ENCODE measurements at regions of chr2 and their contacts with region 1.

Region 1: DNA sequence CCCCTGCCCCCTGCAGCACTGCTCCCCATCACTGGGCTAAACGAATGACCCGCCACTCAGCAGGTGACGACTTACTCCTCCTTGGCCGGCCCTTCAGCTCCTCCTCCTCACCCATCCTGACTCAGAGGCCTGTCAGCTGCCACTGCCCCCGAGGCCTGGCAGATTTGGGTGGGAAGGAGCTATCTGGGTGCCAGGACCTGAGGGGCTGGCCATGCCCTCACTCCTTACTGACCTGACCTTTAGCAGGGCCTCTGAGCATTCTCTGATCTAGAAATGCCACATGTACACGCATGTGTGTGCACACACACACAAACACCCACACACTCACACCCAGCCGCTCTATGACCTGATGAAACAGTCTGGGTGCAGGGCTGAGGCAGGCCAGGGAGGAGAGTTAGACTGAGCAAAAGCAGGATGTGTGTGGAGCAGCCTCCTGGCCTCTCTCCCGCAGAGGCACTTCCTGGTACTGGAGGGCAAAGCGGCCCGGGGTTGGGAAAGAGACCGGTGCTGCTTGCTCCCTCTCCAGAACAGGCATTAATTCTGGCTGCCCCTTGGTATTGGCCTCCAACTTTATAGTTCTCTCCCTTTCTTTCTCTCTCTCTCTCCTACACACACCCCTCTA is 68.0 kb downstream of the ZFP36L2 start:
- DNase-seq: peak; percentile 79
- H3K4me3 Mint-ChIP-seq: peak overlapping the region; percentile 77
- H3K27ac Mint-ChIP-seq: peak overlapping the region; percentile 99
- H3K4me1 Mint-ChIP-seq: peaks cover 72% of the 10 kb centered on the region
- H3K27me3 Mint-ChIP-seq: no peaks in the 10 kb centered on the region

Region 2: DNA sequence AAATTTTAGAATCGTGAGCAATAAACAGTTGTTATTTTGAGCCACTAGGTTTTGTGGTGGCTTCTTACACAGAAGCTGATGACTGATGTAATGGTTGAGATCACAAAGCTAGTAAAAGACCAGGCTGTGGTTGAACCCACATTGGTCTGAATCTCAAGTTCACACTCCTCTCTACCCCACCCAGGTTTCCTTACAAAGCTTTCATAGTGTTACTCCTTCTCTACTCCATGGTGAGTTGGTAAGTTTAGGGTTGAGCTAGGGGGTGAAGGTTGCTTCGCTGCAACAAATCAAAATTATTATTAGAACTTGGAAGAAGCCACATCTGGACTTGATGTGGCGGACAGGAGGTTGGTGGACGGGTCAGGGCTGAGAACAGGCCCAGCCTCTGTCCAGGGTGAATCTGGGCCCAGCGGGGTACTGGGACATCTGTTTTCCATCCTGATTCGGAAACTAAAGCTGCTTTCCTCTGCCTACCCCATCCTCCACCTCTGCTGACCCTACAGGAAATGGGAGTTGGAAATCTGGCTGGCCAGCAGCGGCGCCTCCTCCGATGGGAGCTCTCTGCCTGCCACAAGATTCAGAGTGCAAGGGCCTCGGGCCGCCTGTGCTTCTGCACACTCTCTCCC is 18.3 kb before region 1 on chr2:
- CTCF ChIA-PET with region 1: no interaction called
- intact Hi-C with region 1: loop called (anchors 2 kb)
- DNase-seq: no peak
- H3K4me3 Mint-ChIP-seq: no peak overlapping the region
- H3K27ac Mint-ChIP-seq: peak overlapping the region; percentile 14
- H3K4me1 Mint-ChIP-seq: peaks cover 78% of the 10 kb centered on the region
- H3K27me3 Mint-ChIP-seq: no peaks in the 10 kb centered on the region

Region 3: GRCh38 chr2:43184339-43184895 is 26.0 kb after region 1 on chr2:
- CTCF ChIA-PET with region 1: no interaction called
- intact Hi-C with region 1: loop called (anchors 2 kb)
- DNase-seq: peak; percentile 86
- H3K4me3 Mint-ChIP-seq: no peak overlapping the region
- H3K27ac Mint-ChIP-seq: peak overlapping the region; percentile 89
- H3K4me1 Mint-ChIP-seq: peaks cover 67% of the 10 kb centered on the region
- H3K27me3 Mint-ChIP-seq: no peaks in the 10 kb centered on the region

Region 4: GRCh38 chr2:43194121-43194869 is 35.9 kb after region 1 on chr2:
- CTCF ChIA-PET with region 1: no interaction called
- intact Hi-C with region 1: loop called (anchors 1 kb)
- DNase-seq: no peak
- H3K4me3 Mint-ChIP-seq: peak overlapping the region; percentile 79
- H3K27ac Mint-ChIP-seq: peak overlapping the region; percentile 93
- H3K4me1 Mint-ChIP-seq: peaks cover 57% of the 10 kb centered on the region
- H3K27me3 Mint-ChIP-seq: no peaks in the 10 kb centered on the region

Region 5: GRCh38 chr2:43219383-43220228 is 61.2 kb after region 1 on chr2:
- CTCF ChIA-PET with region 1: interaction called, 6 read pairs
- intact Hi-C with region 1: loop called (anchors 1 kb)
- DNase-seq: peak; percentile 89
- H3K4me3 Mint-ChIP-seq: peak overlapping the region; percentile 93
- H3K27ac Mint-ChIP-seq: peak overlapping the region; percentile 98
- H3K4me1 Mint-ChIP-seq: peaks cover 49% of the 10 kb centered on the region
- H3K27me3 Mint-ChIP-seq: no peaks in the 10 kb centered on the region

Measured in activated naive CD4-positive, alpha-beta T cell treated with anti-CD3 and anti-CD28 coated beads for 36 hours (primary cell).